ENCODE measurements at regions of chr5 and their contacts with region 1.

Region 1: GRCh38 chr5:160787240-160787639 is 64.8 kb downstream of the ATP10B start:
- DNase-seq: peak; percentile 17
- ATAC-seq: peak; percentile 88
- H3K4me3 ChIP-seq: no peak overlapping the region
- H3K27ac ChIP-seq: no peak overlapping the region
- H3K4me1 ChIP-seq: no peaks in the 10 kb centered on the region
- H3K27me3 ChIP-seq: no peaks in the 10 kb centered on the region
- CTCF ChIP-seq: peak; percentile 47 to 55 (median 51); a peak in 5 of 6 replicates
- EP300 ChIP-seq: no peak
- POLR2A ChIP-seq: no peak
- RAD21 ChIP-seq: peak; percentile 59

Region 2: DNA sequence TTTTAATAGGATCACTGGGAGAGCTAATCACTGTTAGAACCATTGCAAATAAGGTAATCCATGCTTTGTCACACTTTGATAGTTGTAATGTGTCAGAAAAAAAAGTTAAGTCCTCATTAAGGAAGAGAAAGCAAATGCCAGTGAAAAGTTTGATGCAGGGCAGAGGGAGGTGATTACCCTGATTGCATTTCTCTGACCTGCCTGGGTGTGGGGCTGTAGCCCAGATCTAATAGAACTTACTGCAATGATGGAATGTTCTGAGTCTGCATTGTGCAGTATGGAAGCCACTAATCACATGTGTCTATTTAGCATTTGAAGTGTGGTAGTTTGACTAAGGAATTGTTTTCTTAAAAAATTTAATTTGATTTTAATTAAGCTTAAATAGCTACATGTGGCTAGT is 137.9 kb before region 1 on chr5:
- CTCF ChIA-PET with region 1: interaction called, 14 read pairs
- POLR2A ChIA-PET with region 1: no interaction called
- RAD21 ChIA-PET with region 1: no interaction called
- SMC1A ChIA-PET with region 1: no interaction called
- in situ Hi-C with region 1: no loop called
- intact Hi-C with region 1: no loop called
- DNase-seq: no peak
- ATAC-seq: peak; percentile 84
- H3K4me3 ChIP-seq: no peak overlapping the region
- H3K27ac ChIP-seq: no peak overlapping the region
- H3K4me1 ChIP-seq: no peaks in the 10 kb centered on the region
- H3K27me3 ChIP-seq: no peaks in the 10 kb centered on the region
- CTCF ChIP-seq: peak; percentile 36 to 45 (median 39); a peak in 4 of 6 replicates
- EP300 ChIP-seq: no peak
- POLR2A ChIP-seq: no peak
- RAD21 ChIP-seq: peak; percentile 45

Region 3: GRCh38 chr5:160685695-160686094 is 101.5 kb before region 1 on chr5:
- CTCF ChIA-PET with region 1: no interaction called
- POLR2A ChIA-PET with region 1: no interaction called
- RAD21 ChIA-PET with region 1: no interaction called
- SMC1A ChIA-PET with region 1: no interaction called
- in situ Hi-C with region 1: no loop called
- intact Hi-C with region 1: loop called (anchors 2 kb)
- DNase-seq: peak; percentile 13
- ATAC-seq: peak; percentile 89
- H3K4me3 ChIP-seq: no peak overlapping the region
- H3K27ac ChIP-seq: no peak overlapping the region
- H3K4me1 ChIP-seq: no peaks in the 10 kb centered on the region
- H3K27me3 ChIP-seq: no peaks in the 10 kb centered on the region; a peak in 1 of 4 replicates
- CTCF ChIP-seq: peak; percentile 47 to 70 (median 50)
- EP300 ChIP-seq: no peak
- POLR2A ChIP-seq: no peak
- RAD21 ChIP-seq: peak; percentile 64

Region 4: DNA sequence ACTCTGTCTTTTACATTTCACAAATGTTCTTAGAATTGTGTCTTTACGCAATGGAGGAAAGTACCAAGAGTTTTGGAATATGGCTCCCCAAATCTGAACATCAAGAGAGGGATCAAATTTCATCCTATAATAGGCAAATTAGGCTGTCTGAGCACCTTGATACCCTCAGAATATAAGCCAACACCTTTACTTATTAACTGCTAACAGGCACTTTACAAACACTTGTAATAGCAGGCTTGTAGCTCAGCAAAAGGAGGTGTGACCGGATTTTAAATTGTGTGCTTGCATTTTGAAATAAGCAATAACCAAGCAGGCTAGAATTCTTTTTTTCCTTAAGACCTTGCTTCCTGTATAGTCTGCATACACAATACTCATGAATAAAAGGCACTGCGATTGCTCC is 27.2 kb before region 1 on chr5:
- CTCF ChIA-PET with region 1: no interaction called
- POLR2A ChIA-PET with region 1: no interaction called
- RAD21 ChIA-PET with region 1: no interaction called
- SMC1A ChIA-PET with region 1: no interaction called
- in situ Hi-C with region 1: no loop called
- intact Hi-C with region 1: no loop called
- DNase-seq: no peak
- ATAC-seq: no peak
- H3K4me3 ChIP-seq: no peak overlapping the region
- H3K27ac ChIP-seq: no peak overlapping the region
- H3K4me1 ChIP-seq: no peaks in the 10 kb centered on the region
- H3K27me3 ChIP-seq: no peaks in the 10 kb centered on the region
- CTCF ChIP-seq: no peak
- EP300 ChIP-seq: no peak
- POLR2A ChIP-seq: no peak
- RAD21 ChIP-seq: no peak

Region 5: GRCh38 chr5:160802592-160802991 is 15.4 kb after region 1 on chr5:
- CTCF ChIA-PET with region 1: interaction called, 6 read pairs
- POLR2A ChIA-PET with region 1: no interaction called
- RAD21 ChIA-PET with region 1: no interaction called
- SMC1A ChIA-PET with region 1: interaction called, 11 read pairs
- in situ Hi-C with region 1: no loop called
- intact Hi-C with region 1: no loop called
- DNase-seq: no peak
- ATAC-seq: peak; percentile 73
- H3K4me3 ChIP-seq: no peak overlapping the region
- H3K27ac ChIP-seq: no peak overlapping the region
- H3K4me1 ChIP-seq: no peaks in the 10 kb centered on the region; the same call in 1 of the 2 replicates
- H3K27me3 ChIP-seq: no peaks in the 10 kb centered on the region
- CTCF ChIP-seq: peak; percentile 24 to 70 (median 34); a peak in 3 of 6 replicates
- EP300 ChIP-seq: no peak
- POLR2A ChIP-seq: no peak
- RAD21 ChIP-seq: peak; percentile 56